ENCODE measurements at regions of chr6 and their contacts with region 1.

Region 1: GRCh38 chr6:13908955-13909381 is 15.8 kb upstream of the RNF182 start:
- DNase-seq: no peak
- H3K4me3 ChIP-seq: no peak overlapping the region
- H3K27ac ChIP-seq: no peak overlapping the region
- H3K4me1 ChIP-seq: no peaks in the 10 kb centered on the region
- H3K27me3 ChIP-seq: peaks cover 0 to 46% (median 0%) of the 10 kb centered on the region in 4 donors
- CTCF ChIP-seq: peak; percentile 66 to 84 (median 74)
- POLR2A ChIP-seq: no peak

Region 2: GRCh38 chr6:14026831-14027539 is 118.0 kb after region 1 on chr6:
- intact Hi-C with region 1: no loop called
- DNase-seq: no peak
- H3K4me3 ChIP-seq: no peak overlapping the region
- H3K27ac ChIP-seq: no peak overlapping the region
- H3K4me1 ChIP-seq: no peaks in the 10 kb centered on the region
- H3K27me3 ChIP-seq: peaks cover 0 to 54% (median 0%) of the 10 kb centered on the region in 4 donors
- CTCF ChIP-seq: no peak
- POLR2A ChIP-seq: no peak

Region 3: DNA sequence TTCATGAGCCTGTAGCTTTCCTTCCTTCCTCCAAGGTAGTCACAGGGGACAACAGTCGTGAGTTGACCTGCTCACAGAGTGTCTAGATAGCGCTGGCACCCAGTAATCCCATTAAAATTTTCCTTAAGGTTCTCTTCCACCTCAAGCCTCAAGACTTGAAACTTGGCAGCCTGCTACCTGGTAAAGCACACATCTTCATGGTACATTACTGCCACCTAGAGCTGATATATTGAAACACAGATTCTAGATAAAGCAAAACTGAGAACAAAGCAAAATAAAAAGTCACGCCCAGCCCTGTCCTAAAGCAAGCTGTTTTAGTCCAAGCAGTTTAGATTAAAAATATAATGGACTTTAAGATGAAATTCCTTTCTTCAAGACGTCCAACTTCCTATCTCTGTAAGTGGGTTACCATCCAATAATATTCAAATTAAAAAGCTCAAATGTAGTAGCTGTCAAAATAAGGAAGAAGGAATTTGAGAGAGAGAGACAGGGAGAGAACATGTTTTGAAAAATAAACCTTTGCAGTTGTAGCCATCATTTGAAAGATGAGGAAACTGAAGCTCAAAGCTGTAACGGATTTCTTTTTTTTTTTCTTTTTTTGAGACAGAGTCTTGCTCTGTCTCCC is 157.9 kb after region 1 on chr6:
- intact Hi-C with region 1: loop called (anchors 10 kb)
- DNase-seq: no peak
- H3K4me3 ChIP-seq: no peak overlapping the region
- H3K27ac ChIP-seq: no peak overlapping the region
- H3K4me1 ChIP-seq: peaks cover 0 to 21% (median 0%) of the 10 kb centered on the region in 3 donors
- H3K27me3 ChIP-seq: peaks cover 0 to 4% (median 0%) of the 10 kb centered on the region in 4 donors
- CTCF ChIP-seq: peak; percentile 35 to 80 (median 63)
- POLR2A ChIP-seq: no peak

Region 4: DNA sequence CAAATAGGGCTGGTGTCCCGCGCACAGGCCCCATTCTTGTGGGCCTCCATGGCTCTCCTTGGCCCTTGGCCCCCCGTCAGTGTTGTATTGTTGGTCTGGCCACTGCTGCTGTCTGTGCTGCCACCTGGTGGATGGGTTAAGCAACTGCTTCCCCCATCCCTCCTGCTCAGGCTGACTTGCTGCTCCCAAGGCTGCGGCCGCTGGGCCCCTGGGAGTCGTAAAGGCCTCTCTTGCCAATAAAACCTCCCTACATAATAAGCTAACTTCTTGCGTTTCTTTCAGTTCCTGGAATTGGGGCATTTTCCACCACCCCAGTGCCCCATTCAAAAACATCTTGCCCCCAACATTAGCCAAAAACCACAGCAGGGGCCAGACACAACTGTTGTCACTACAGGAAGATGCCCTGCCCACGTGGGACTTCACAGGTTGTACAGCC is 235.7 kb after region 1 on chr6:
- intact Hi-C with region 1: loop called (anchors 10 kb)
- DNase-seq: peak; percentile 1
- H3K4me3 ChIP-seq: no peak overlapping the region
- H3K27ac ChIP-seq: no peak overlapping the region
- H3K4me1 ChIP-seq: peaks cover 0 to 16% (median 5%) of the 10 kb centered on the region in 3 donors
- H3K27me3 ChIP-seq: no peaks in the 10 kb centered on the region
- CTCF ChIP-seq: peak; percentile 81 to 92 (median 87)
- POLR2A ChIP-seq: no peak

Measured in esophagus squamous epithelium (tissue), 5 donors.